Heart left ventricle (tissue), 16 donors: ENCODE measurements at regions of chr15 and their contacts with region 1.

Region 1: GRCh38 chr15:81000624-81001151 is at the start of gene TLNRD1:
- DNase-seq: peak; percentile 93 to 95 (median 94)
- ATAC-seq: peak; percentile 60 to 87 (median 83)
- H3K4me3 ChIP-seq: peak within 1 kb of the TSS; percentile 57 to 98 (median 90)
- H3K27ac ChIP-seq: peak within 1 kb of the TSS; percentile 88 to 100 (median 99)
- H3K4me1 ChIP-seq: peaks cover 3 to 55% (median 34%) of the 10 kb centered on the region in 12 donors
- H3K27me3 ChIP-seq: peaks cover 0 to 7% (median 0%) of the 10 kb centered on the region in 9 donors
- CTCF ChIP-seq: no peak
- POLR2A ChIP-seq: peak in 1 of 2 donors; percentile 81
- total RNA-seq, gene TLNRD1: 5.3 to 30.8 (median 8.0) TPM

Region 2: DNA sequence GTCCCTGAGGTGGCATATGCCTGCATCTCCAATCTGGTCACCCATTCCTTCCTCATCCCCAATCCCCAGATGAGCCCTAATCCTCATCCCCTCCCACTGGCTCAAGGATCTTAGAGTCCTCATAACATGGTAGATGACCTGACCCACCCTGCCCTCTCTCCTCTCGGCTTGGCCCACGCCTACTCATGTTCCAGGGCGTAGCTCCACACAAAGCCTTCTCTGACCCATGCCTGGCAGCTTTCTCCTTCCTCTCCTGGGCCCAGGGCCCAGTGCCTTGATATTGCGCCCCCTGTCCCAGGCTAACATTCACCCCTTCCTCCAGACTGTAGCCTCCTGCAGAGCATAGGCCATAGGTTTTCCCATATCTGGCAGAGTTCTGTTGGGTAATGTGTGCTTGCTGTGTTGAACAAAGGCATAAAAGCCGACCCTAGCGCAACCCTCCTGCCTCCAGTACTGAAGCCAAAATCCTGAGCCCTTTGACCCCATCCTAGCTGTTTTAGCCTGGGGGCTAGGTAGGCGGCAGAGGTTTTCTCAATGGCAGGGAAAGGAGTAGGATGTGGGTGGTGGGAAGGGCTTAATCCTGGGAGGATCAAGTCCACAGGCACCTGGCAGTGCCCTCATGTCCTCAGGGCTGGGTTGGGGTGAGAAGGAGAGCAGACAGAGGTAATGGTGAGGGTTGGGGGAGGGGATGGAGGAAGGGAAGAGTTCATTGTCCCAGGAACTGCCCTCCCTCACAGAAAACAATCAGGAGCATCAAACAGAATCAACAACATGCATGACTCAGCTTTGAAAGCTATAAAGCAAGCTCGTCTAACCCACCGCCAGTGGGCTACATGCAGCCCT is 46.5 kb before region 1 on chr15:
- intact Hi-C with region 1: no loop called
- DNase-seq: no peak
- ATAC-seq: peak in 1 of 4 donors; percentile 15
- H3K4me3 ChIP-seq: no peak overlapping the region
- H3K27ac ChIP-seq: no peak overlapping the region
- H3K4me1 ChIP-seq: peaks cover 0 to 10% (median 0%) of the 10 kb centered on the region in 12 donors
- H3K27me3 ChIP-seq: no peaks in the 10 kb centered on the region
- CTCF ChIP-seq: no peak
- POLR2A ChIP-seq: no peak

Region 3: GRCh38 chr15:81038975-81039607 is 38.4 kb after region 1 on chr15:
- intact Hi-C with region 1: loop called in 2 of 10 experiments (anchors 5 kb)
- DNase-seq: no peak
- ATAC-seq: peak; percentile 68 to 84 (median 82)
- H3K4me3 ChIP-seq: no peak overlapping the region
- H3K27ac ChIP-seq: peak overlapping the region in 11 of 12 donors; percentile 8 to 62 (median 31)
- H3K4me1 ChIP-seq: peaks cover 0 to 23% (median 9%) of the 10 kb centered on the region in 12 donors
- H3K27me3 ChIP-seq: no peaks in the 10 kb centered on the region
- CTCF ChIP-seq: no peak
- POLR2A ChIP-seq: no peak

Region 4: GRCh38 chr15:81049835-81050234 is 49.1 kb after region 1 on chr15:
- intact Hi-C with region 1: no loop called
- DNase-seq: no peak
- ATAC-seq: no peak
- H3K4me3 ChIP-seq: no peak overlapping the region
- H3K27ac ChIP-seq: no peak overlapping the region
- H3K4me1 ChIP-seq: peaks cover 0 to 10% (median 0%) of the 10 kb centered on the region in 12 donors
- H3K27me3 ChIP-seq: no peaks in the 10 kb centered on the region
- CTCF ChIP-seq: no peak
- POLR2A ChIP-seq: no peak

Region 5: GRCh38 chr15:81091889-81092558 is 91.3 kb after region 1 on chr15:
- intact Hi-C with region 1: loop called in 6 of 10 experiments (anchors 5 kb)
- DNase-seq: peak in 4 of 5 donors; percentile 32 to 68 (median 47)
- ATAC-seq: peak; percentile 81 to 96 (median 94)
- H3K4me3 ChIP-seq: peak overlapping the region in 3 of 12 donors; percentile 8 to 19 (median 8)
- H3K27ac ChIP-seq: peak overlapping the region in 11 of 12 donors; percentile 50 to 82 (median 62)
- H3K4me1 ChIP-seq: peaks cover 0 to 35% (median 26%) of the 10 kb centered on the region in 12 donors
- H3K27me3 ChIP-seq: no peaks in the 10 kb centered on the region
- CTCF ChIP-seq: no peak
- POLR2A ChIP-seq: no peak

Region 6: GRCh38 chr15:81098861-81099651 is 98.4 kb after region 1 on chr15:
- intact Hi-C with region 1: loop called (anchors 2 to 10 kb)
- DNase-seq: peak; percentile 54 to 81 (median 68)
- ATAC-seq: peak; percentile 74 to 92 (median 82)
- H3K4me3 ChIP-seq: peak overlapping the region in 6 of 12 donors; percentile 3 to 27 (median 18)
- H3K27ac ChIP-seq: peak overlapping the region in 11 of 12 donors; percentile 15 to 74 (median 57)
- H3K4me1 ChIP-seq: peaks cover 0 to 43% (median 21%) of the 10 kb centered on the region in 12 donors
- H3K27me3 ChIP-seq: no peaks in the 10 kb centered on the region
- CTCF ChIP-seq: no peak
- POLR2A ChIP-seq: no peak